Spleen (tissue), 13 donors: ENCODE measurements at regions of chr5 and their contacts with region 1.

Region 1: DNA sequence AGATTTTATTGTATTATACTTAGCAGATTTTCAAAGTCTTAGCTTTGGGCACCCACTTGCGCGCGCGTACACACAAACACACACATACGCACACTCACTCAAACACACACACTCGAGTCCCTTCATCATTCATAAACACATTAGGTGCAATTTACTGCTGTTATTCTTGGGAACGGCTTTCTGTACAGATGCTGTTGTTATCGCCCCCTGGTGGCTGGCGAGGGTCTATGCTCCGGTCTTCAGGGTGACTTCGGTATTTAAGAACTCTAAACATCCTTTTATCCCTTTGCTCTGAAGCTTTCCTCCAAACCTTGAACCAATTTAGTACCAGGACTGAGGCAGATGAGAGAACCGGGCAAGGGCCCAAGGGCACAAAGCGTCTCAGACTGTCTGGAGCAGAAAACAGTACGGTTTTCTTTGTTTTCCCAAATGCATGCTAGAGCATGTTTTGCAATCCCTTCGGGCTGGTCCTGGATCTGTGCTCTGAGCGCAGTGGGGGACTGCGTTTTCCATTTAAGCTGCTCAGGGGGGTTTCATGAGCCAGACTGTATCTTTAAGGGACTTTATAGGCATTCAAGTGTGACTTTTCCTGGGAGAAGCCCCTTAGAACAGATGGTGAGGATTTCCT is 1.7 kb upstream of the SLIT3 start:
- DNase-seq: peak; percentile 81
- H3K4me3 ChIP-seq: no peak overlapping the region
- H3K27ac ChIP-seq: no peak overlapping the region
- H3K4me1 ChIP-seq: peaks cover 0 to 26% (median 12%) of the 10 kb centered on the region in 6 donors
- H3K27me3 ChIP-seq: peaks cover 0 to 81% (median 16%) of the 10 kb centered on the region in 7 donors
- CTCF ChIP-seq: peak; percentile 39 to 83 (median 74)
- POLR2A ChIP-seq: no peak

Region 2: GRCh38 chr5:168679515-168679920 is 623.1 kb before region 1 on chr5:
- intact Hi-C with region 1: loop called (anchors 5 kb)
- DNase-seq: peak; percentile 79
- H3K4me3 ChIP-seq: no peak overlapping the region
- H3K27ac ChIP-seq: no peak overlapping the region
- H3K4me1 ChIP-seq: peaks cover 13 to 47% (median 32%) of the 10 kb centered on the region in 6 donors
- H3K27me3 ChIP-seq: no peaks in the 10 kb centered on the region
- CTCF ChIP-seq: peak; percentile 39 to 89 (median 78)
- POLR2A ChIP-seq: no peak

Region 3: GRCh38 chr5:168976311-168976970 is 326.2 kb before region 1 on chr5:
- intact Hi-C with region 1: no loop called
- DNase-seq: no peak
- H3K4me3 ChIP-seq: no peak overlapping the region
- H3K27ac ChIP-seq: no peak overlapping the region
- H3K4me1 ChIP-seq: no peaks in the 10 kb centered on the region
- H3K27me3 ChIP-seq: peaks cover 0 to 15% (median 0%) of the 10 kb centered on the region in 7 donors
- CTCF ChIP-seq: no peak
- POLR2A ChIP-seq: no peak

Region 4: GRCh38 chr5:168987543-168988300 is 314.9 kb before region 1 on chr5:
- intact Hi-C with region 1: loop called (anchors 5 kb)
- DNase-seq: no peak
- H3K4me3 ChIP-seq: no peak overlapping the region
- H3K27ac ChIP-seq: no peak overlapping the region
- H3K4me1 ChIP-seq: peaks cover 0 to 17% (median 6%) of the 10 kb centered on the region in 6 donors
- H3K27me3 ChIP-seq: peaks cover 0 to 27% (median 0%) of the 10 kb centered on the region in 7 donors
- CTCF ChIP-seq: peak; percentile 43 to 86 (median 77)
- POLR2A ChIP-seq: no peak